ENCODE measurements at regions of chr12 and their contacts with region 1.

Region 1: DNA sequence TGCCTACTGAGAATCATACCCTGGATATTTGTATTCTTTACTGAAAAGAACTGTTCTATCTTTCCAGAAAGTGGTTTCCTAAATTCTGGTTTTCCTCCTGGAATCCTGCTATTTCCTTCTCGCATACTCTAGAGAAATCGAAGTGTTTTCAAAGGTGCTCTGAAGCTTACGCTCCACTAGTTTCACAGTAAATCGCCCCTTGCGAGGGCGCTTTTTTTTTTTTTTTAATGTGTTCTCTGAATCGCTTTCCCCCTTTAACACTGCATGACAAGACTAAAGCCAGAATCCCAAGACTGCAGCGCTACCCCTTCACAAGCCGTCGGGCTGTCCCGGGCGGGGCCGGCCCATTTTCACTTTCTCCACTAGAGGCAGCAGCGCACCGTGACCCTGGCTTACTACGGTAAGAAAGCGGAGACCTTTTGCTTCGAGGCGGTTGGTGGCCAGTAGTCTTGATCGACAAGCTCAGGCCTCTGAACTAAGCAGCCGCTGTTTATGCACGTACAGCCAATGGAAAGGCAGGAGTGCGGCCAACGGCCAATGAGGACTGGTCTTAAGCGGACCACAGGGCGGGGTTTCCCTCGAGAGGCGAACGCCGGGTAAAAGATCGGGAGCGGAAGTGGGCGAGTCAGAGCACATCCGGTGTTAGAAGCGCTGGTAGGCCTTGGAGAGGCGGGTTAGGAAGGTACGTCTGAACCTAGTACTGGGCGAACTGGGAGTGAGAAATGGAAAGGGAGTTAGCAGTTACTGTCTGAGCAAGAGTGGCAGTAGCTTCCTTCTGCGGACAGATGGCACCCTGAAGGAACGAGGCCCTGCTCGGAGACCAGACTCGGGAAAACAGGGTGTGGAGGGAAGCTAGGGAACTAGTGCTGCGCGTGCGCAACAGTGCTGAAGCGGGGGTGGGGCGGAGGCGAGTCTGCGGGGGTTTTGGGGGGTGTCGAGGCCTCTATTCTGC is at the start of gene TMBIM6:
- DNase-seq: peak; percentile 100
- ATAC-seq: peak; percentile 91
- H3K4me3 Mint-ChIP-seq: peak within 1 kb of the TSS; percentile 99
- H3K27ac Mint-ChIP-seq: peak within 1 kb of the TSS; percentile 95
- H3K4me1 Mint-ChIP-seq: peaks cover 31% of the 10 kb centered on the region
- H3K27me3 Mint-ChIP-seq: no peaks in the 10 kb centered on the region
- CTCF ChIP-seq: peak; percentile 95
- total RNA-seq, gene TMBIM6: 437 to 443 TPM

Region 2: DNA sequence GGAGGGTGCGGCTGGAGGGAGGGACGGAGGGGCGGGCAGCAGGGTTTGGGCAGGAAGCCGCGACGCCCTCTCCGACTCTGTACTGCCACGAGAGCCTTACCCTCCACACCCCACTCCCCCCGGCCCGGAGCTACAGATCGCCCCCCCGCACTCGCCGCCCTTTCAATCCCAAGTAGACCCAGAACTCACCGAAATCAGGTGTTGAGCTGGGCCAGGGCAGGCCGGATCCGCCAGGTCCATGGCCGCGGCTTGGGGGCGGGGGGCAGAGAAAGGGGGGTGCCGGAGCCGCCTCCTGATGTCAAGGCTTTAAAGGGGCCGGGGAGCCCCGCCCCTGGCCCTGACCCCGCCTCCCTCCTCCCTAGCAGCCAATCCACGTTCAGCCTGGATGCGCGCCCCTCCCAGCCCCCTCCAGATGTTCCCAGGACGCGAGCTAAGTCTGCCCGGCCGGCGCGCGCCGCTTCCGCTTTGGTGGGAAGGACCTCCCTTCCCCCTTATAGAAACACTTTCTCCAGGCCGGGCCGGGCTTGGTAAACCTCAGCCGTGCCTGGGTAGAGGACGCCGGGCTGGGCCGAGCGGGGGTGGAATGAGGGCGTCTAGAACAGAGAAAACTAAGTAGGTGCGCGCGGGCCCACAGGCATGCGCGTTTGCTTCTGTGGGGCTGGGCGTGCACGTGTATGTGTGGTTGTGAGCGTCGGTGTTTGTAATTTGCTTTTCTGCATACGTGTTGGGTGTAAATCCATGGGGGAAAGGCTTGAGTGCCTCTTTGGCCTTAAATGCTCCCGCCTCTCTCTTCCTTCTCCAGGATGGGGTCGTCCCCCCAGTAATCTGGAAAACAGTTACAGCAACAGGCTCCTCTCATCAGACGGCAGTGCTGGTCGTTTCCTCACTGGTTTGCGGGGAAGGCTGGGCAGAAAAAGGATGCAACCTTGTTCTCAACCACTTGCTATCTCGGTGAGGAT is 87.2 kb after region 1 on chr12 and contains the start of gene NCKAP5L:
- CTCF ChIA-PET with region 1: interaction called, 11 read pairs
- POLR2A ChIA-PET with region 1: interaction called, 5 read pairs
- intact Hi-C with region 1: no loop called
- DNase-seq: peak; percentile 97
- ATAC-seq: peak; percentile 99
- H3K4me3 Mint-ChIP-seq: peak within 1 kb of the TSS; percentile 90
- H3K27ac Mint-ChIP-seq: peak within 1 kb of the TSS; percentile 92
- H3K4me1 Mint-ChIP-seq: peaks cover 25% of the 10 kb centered on the region
- H3K27me3 Mint-ChIP-seq: no peaks in the 10 kb centered on the region
- CTCF ChIP-seq: no peak
- total RNA-seq, gene NCKAP5L: 5.5 to 5.7 TPM

Region 3: DNA sequence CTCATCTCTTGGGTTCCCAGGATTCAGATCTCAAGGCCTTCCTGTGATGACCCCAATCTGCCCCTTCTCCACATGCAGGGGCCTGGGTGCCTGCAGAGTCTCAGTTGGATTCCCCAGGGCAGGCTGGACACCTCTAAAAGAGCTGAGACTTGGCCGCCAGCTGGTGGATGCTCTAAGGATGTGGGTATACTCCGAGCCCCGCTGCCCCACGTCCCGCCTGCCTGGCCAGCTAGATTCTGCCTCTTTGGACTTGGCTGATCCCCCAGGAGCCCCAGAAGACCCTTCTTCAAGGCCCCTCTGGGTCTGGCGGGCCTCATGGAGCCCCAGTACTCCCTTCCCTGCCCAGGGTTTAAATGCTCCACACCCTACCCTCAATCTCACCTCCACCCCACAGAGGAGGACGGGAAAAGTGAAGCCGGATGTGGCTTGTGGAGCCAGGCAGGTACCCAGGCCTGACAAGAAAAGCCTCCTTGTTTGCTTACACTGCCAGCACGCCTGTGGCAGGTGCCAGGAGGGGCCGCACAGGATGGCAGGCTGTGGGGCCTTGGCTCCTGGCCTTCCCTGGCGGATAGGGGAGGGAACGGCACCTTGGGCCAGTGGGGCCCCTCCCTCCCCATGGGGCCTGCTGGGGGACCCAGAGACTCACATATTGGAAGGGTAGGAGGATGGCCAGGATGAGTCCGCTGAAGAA is 147.4 kb after region 1 on chr12:
- CTCF ChIA-PET with region 1: no interaction called
- POLR2A ChIA-PET with region 1: no interaction called
- intact Hi-C with region 1: no loop called
- DNase-seq: no peak
- ATAC-seq: no peak
- H3K4me3 Mint-ChIP-seq: no peak overlapping the region
- H3K27ac Mint-ChIP-seq: no peak overlapping the region
- H3K4me1 Mint-ChIP-seq: no peaks in the 10 kb centered on the region
- H3K27me3 Mint-ChIP-seq: peaks cover 3% of the 10 kb centered on the region
- CTCF ChIP-seq: no peak

Region 4: DNA sequence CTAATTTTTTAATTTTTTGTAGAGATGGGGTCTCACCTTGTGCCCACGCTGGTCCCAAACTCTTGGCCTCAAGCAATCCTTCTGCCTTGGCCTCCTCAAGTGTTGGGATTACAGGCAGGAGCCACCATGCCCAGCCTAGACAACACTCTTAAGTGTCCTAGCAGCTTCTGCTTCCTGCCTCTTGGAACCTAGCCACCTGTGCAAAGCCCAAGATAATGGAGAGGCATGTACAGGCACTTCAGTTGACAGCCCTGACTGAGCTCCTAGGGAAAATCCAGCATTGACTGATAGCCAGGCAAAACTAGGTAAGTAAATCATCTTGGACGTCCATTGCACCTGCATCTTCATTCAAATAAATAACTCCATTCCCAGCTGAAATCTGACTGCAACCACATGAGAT is 386.3 kb after region 1 on chr12:
- CTCF ChIA-PET with region 1: no interaction called
- POLR2A ChIA-PET with region 1: no interaction called
- intact Hi-C with region 1: no loop called
- DNase-seq: no peak
- ATAC-seq: no peak
- H3K4me3 Mint-ChIP-seq: no peak overlapping the region
- H3K27ac Mint-ChIP-seq: peak overlapping the region; percentile 16
- H3K4me1 Mint-ChIP-seq: peaks cover 12% of the 10 kb centered on the region
- H3K27me3 Mint-ChIP-seq: no peaks in the 10 kb centered on the region
- CTCF ChIP-seq: no peak